CD8-positive, alpha-beta T cell (primary cell): ENCODE measurements at regions of chr16 and their contacts with region 1.

Region 1: GRCh38 chr16:53435066-53435688 is 906 bp downstream of the RBL2 start:
- DNase-seq: peak; percentile 39 to 90 (median 71)
- ATAC-seq: peak; percentile 59
- H3K4me3 ChIP-seq: peak overlapping the region; percentile 93 to 100
- H3K4me3 Mint-ChIP-seq: peak overlapping the region; percentile 94
- H3K27ac ChIP-seq: peak overlapping the region; percentile 92 to 94
- H3K27ac Mint-ChIP-seq: peak overlapping the region; percentile 99
- H3K4me1 ChIP-seq: peaks cover 36% of the 10 kb centered on the region
- H3K4me1 Mint-ChIP-seq: peaks cover 47% of the 10 kb centered on the region
- H3K27me3 ChIP-seq: no peaks in the 10 kb centered on the region
- H3K27me3 Mint-ChIP-seq: no peaks in the 10 kb centered on the region
- CTCF ChIP-seq: no peak

Region 2: GRCh38 chr16:53372992-53373871 is 61.9 kb before region 1 on chr16:
- CTCF ChIA-PET with region 1: no interaction called
- POLR2A ChIA-PET with region 1: interaction called, 6 read pairs
- intact Hi-C with region 1: loop called (anchors 2 to 5 kb)
- DNase-seq: peak; percentile 60 to 88 (median 77)
- ATAC-seq: peak; percentile 96
- H3K4me3 ChIP-seq: peak overlapping the region; percentile 54 to 84
- H3K4me3 Mint-ChIP-seq: no peak overlapping the region
- H3K27ac ChIP-seq: peak overlapping the region in 1 of 2 experiments; percentile 35
- H3K27ac Mint-ChIP-seq: peak overlapping the region; percentile 78
- H3K4me1 ChIP-seq: peaks cover 7% of the 10 kb centered on the region
- H3K4me1 Mint-ChIP-seq: peaks cover 33% of the 10 kb centered on the region
- H3K27me3 ChIP-seq: peaks cover 0 to 3% of the 10 kb centered on the region in 2 experiments
- H3K27me3 Mint-ChIP-seq: peaks cover 6% of the 10 kb centered on the region
- CTCF ChIP-seq: no peak

Region 3: DNA sequence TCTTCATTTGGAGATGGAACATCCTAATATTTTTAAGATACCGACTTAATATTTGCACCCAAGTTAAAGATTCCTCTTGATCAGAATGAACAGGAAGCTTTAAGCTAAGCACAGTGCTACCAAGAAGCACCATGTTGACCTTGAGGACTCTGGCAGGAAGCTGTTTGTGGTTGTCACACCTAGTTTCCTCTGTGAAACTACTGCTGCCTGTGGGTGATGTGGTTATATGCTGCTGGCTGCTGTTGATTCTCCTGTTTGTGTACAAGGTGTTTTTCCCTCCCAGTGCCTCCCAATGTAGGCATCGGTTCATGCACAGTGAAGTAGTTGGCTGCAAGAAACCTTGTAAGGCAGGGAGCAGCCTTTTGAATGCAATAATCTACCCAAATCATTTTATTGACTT is 22.5 kb after region 1 on chr16:
- CTCF ChIA-PET with region 1: interaction called, 28 read pairs
- POLR2A ChIA-PET with region 1: interaction called, 139 read pairs
- intact Hi-C with region 1: loop called (anchors 1 kb)
- DNase-seq: peak; percentile 46 to 96 (median 76)
- ATAC-seq: peak; percentile 70
- H3K4me3 ChIP-seq: peak overlapping the region; percentile 42 to 49
- H3K4me3 Mint-ChIP-seq: peak overlapping the region; percentile 76
- H3K27ac ChIP-seq: peak overlapping the region; percentile 65 to 72
- H3K27ac Mint-ChIP-seq: peak overlapping the region; percentile 94
- H3K4me1 ChIP-seq: peaks cover 90% of the 10 kb centered on the region
- H3K4me1 Mint-ChIP-seq: peaks cover 92% of the 10 kb centered on the region
- H3K27me3 ChIP-seq: no peaks in the 10 kb centered on the region
- H3K27me3 Mint-ChIP-seq: no peaks in the 10 kb centered on the region
- CTCF ChIP-seq: no peak

Region 4: DNA sequence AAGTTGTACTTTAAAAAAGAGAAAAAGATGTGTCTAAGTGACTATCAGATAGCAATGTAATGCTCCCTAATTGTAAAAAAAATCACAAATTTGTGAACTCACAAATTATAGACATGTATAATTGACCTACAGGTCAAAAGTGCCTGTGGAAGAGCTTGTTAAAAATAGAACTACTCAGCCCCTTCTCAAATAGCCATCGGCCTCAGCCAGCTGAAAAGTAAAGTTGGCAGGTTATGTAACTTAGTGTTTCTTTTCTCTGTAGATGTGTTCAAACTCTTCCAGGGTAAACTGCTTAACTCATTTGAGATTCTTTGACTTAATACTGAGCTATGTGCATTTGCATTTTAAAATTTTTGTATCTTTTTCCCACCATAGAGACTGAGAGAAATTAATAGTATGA is 54.6 kb after region 1 on chr16:
- CTCF ChIA-PET with region 1: interaction called, 3 read pairs
- POLR2A ChIA-PET with region 1: interaction called, 8 read pairs
- intact Hi-C with region 1: loop called in 1 of 2 experiments (anchors 5 kb)
- DNase-seq: no peak
- ATAC-seq: no peak
- H3K4me3 ChIP-seq: no peak overlapping the region
- H3K4me3 Mint-ChIP-seq: no peak overlapping the region
- H3K27ac ChIP-seq: no peak overlapping the region
- H3K27ac Mint-ChIP-seq: peak overlapping the region; percentile 62
- H3K4me1 ChIP-seq: peaks cover 17% of the 10 kb centered on the region
- H3K4me1 Mint-ChIP-seq: peaks cover 66% of the 10 kb centered on the region
- H3K27me3 ChIP-seq: no peaks in the 10 kb centered on the region
- H3K27me3 Mint-ChIP-seq: no peaks in the 10 kb centered on the region
- CTCF ChIP-seq: no peak

Region 5: DNA sequence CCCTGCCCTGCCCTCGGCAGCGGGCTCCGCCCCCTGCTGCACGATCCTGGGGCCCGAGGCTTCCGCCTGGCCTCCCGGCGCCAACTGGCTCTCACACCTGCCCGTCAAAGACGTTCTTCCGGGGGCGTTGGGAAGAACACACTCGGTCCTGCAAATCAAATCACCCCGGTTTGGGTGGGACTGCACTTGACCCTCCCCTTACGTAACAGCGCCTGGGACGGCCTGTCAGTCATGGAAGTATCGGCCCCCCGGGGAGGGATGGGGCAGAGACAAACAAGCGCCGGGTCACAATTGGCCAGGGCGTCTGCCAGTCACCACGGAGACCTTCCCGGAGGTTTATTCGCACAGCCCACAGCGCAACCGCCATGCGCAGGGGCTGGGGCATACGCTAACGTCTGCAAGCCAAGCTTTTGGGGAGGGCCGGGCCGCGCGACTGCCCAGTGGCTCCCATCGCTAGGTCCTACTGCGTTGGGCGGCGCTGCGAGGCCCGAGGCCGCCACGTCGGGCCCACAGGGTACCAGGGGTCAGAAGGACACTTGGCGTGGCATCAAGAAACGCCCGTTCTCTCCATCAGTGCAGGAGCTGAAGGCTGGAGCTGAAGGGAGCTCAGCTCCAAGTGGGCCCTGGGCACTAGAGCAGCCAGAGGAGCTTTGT is 68.2 kb after region 1 on chr16:
- CTCF ChIA-PET with region 1: interaction called, 4 read pairs
- POLR2A ChIA-PET with region 1: interaction called, 77 read pairs
- intact Hi-C with region 1: loop called (anchors 1 kb)
- DNase-seq: peak; percentile 99 to 100 (median 99)
- ATAC-seq: peak; percentile 89
- H3K4me3 ChIP-seq: peak overlapping the region; percentile 74 to 78
- H3K4me3 Mint-ChIP-seq: peak overlapping the region; percentile 92
- H3K27ac ChIP-seq: peak overlapping the region; percentile 77 to 88
- H3K27ac Mint-ChIP-seq: peak overlapping the region; percentile 97
- H3K4me1 ChIP-seq: peaks cover 41% of the 10 kb centered on the region
- H3K4me1 Mint-ChIP-seq: peaks cover 48% of the 10 kb centered on the region
- H3K27me3 ChIP-seq: no peaks in the 10 kb centered on the region
- H3K27me3 Mint-ChIP-seq: no peaks in the 10 kb centered on the region
- CTCF ChIP-seq: no peak

Region 6: GRCh38 chr16:53666786-53667415 is 231.7 kb after region 1 on chr16:
- CTCF ChIA-PET with region 1: no interaction called
- POLR2A ChIA-PET with region 1: no interaction called
- intact Hi-C with region 1: no loop called
- DNase-seq: no peak
- ATAC-seq: no peak
- H3K4me3 ChIP-seq: no peak overlapping the region
- H3K4me3 Mint-ChIP-seq: no peak overlapping the region
- H3K27ac ChIP-seq: no peak overlapping the region
- H3K27ac Mint-ChIP-seq: no peak overlapping the region
- H3K4me1 ChIP-seq: no peaks in the 10 kb centered on the region
- H3K4me1 Mint-ChIP-seq: no peaks in the 10 kb centered on the region
- H3K27me3 ChIP-seq: no peaks in the 10 kb centered on the region
- H3K27me3 Mint-ChIP-seq: no peaks in the 10 kb centered on the region
- CTCF ChIP-seq: no peak